Prostate gland (tissue), 2 donors: ENCODE measurements at regions of chr6 and their contacts with region 1.

Region 1: GRCh38 chr6:35797837-35798526 is 859 bp upstream of the CLPS start:
- DNase-seq: no peak
- H3K4me3 ChIP-seq: no peak overlapping the region
- H3K27ac ChIP-seq: no peak overlapping the region
- H3K4me1 ChIP-seq: no peaks in the 10 kb centered on the region
- H3K27me3 ChIP-seq: no peaks in the 10 kb centered on the region
- CTCF ChIP-seq: no peak
- POLR2A ChIP-seq: no peak

Region 2: DNA sequence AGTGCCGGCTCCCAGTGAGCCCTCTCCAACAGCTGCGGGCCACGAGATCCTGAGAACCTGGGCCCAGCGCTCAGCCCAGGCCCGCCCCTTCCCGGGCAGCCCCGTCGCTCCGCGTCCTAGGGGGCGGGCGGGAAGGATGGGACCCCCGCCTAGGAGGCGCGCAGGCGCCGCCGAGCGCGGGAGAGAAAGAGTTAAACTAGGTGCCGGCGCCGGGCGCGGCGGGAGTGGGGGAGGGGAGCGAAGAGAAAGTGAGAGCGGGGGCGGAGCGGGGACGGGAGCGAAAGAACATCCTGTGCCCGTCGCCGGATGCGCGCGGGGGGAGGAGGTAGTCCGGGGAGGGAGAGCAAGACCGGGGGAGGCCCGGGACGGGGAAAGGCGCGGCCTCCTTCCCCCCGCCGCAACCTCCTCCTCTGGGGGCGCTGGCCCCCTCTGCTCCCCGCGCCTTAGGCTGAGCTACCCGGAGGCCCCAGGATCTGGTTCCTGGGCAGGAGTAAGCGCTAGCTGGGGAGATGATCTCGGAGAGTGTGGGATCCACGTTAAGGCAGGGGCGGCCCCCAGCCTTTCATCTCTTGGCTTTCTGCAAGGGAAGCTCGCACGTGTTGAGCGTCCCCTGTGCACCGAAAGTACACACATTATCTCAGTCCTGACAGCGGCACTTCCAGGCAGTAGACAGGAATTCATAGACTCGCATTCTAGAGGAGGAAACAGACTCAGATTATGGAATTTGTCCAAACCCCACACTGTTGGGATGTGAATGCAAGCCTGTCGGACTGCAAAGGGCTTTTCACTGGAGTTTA is 66.0 kb before region 1 on chr6:
- intact Hi-C with region 1: no loop called
- DNase-seq: peak; percentile 98
- H3K4me3 ChIP-seq: peak overlapping the region; percentile 46 to 50
- H3K27ac ChIP-seq: peak overlapping the region; percentile 99 to 100
- H3K4me1 ChIP-seq: peaks cover 58% of the 10 kb centered on the region
- H3K27me3 ChIP-seq: no peaks in the 10 kb centered on the region
- CTCF ChIP-seq: peak in 1 of 4 experiments; percentile 10
- POLR2A ChIP-seq: peak; percentile 59

Region 3: DNA sequence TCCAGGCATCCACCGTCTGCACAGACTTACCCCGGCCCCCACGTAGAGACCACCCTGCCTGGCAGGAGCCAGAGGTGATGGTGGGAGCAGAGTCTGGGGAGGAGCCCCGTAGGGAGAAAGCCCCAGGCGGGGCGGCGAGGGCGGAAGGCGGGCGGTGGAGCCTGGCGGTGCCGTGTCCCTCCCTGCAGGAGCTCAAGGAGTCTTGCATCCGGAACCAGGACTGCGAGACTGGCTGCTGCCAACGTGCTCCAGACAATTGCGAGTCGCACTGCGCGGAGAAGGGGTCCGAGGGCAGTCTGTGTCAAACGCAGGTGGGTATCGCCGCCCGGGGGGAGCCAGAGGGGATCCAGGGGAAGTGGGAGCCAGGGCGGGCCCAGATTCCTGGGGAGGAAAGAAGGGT is 11.2 kb before region 1 on chr6:
- intact Hi-C with region 1: loop called (anchors 1 kb)
- DNase-seq: no peak
- H3K4me3 ChIP-seq: no peak overlapping the region
- H3K27ac ChIP-seq: no peak overlapping the region
- H3K4me1 ChIP-seq: no peaks in the 10 kb centered on the region
- H3K27me3 ChIP-seq: peaks cover 16% of the 10 kb centered on the region
- CTCF ChIP-seq: no peak
- POLR2A ChIP-seq: no peak